Activated CD4-positive, alpha-beta T cell treated with anti-CD3 and anti-CD28 coated beads, Interleukin-2, amount 10 ng/mL, durations not matched to agents 24 days and 14 days (primary cell): ENCODE measurements at regions of chr12 and their contacts with region 1.

Region 1: GRCh38 chr12:110549716-110550115 is 33.4 kb downstream of the PPTC7 start:
- DNase-seq: no peak
- H3K4me3 Mint-ChIP-seq: no peak overlapping the region
- H3K27ac Mint-ChIP-seq: peak overlapping the region; percentile 55
- H3K4me1 Mint-ChIP-seq: peaks cover 32% of the 10 kb centered on the region
- H3K27me3 Mint-ChIP-seq: no peaks in the 10 kb centered on the region

Region 2: DNA sequence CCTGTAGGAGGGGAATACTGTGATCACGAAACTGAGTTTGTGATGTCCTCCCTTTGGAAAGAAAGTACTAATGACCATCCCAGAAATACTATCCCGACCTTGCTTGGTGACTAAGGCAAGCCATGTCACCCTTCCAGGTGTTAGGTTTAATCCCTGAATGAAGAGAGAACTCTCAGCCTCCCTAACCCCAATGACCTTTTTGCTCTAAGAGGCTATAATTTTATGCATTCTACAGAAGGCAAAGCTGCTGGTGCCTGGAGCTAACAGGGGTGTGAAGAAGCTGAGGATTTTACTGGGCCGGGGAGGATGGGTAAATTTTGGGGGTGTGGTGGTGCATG is 493.6 kb before region 1 on chr12:
- intact Hi-C with region 1: no loop called
- DNase-seq: no peak
- H3K4me3 Mint-ChIP-seq: no peak overlapping the region
- H3K27ac Mint-ChIP-seq: peak overlapping the region; percentile 90
- H3K4me1 Mint-ChIP-seq: peaks cover 41% of the 10 kb centered on the region
- H3K27me3 Mint-ChIP-seq: no peaks in the 10 kb centered on the region

Region 3: GRCh38 chr12:110501752-110502738 is 47.7 kb before region 1 on chr12 and contains the starts of genes RAD9B and VPS29:
- intact Hi-C with region 1: no loop called
- DNase-seq: peak; percentile 100
- H3K4me3 Mint-ChIP-seq: peak within 1 kb of the TSS; percentile 99
- H3K27ac Mint-ChIP-seq: peak within 1 kb of the TSS; percentile 99
- H3K4me1 Mint-ChIP-seq: peaks cover 27% of the 10 kb centered on the region
- H3K27me3 Mint-ChIP-seq: peaks cover 2% of the 10 kb centered on the region
- total RNA-seq, gene RAD9B: 0.37 and 0.95 TPM in 2 replicates
- total RNA-seq, gene VPS29: 101 and 106 TPM in 2 replicates

Region 4: GRCh38 chr12:110513842-110514241 is 35.9 kb before region 1 on chr12:
- intact Hi-C with region 1: loop called (anchors 5 kb)
- DNase-seq: no peak
- H3K4me3 Mint-ChIP-seq: no peak overlapping the region
- H3K27ac Mint-ChIP-seq: no peak overlapping the region
- H3K4me1 Mint-ChIP-seq: peaks cover 1% of the 10 kb centered on the region
- H3K27me3 Mint-ChIP-seq: peaks cover 13% of the 10 kb centered on the region

Region 5: GRCh38 chr12:110590806-110591326 is 41.1 kb after region 1 on chr12:
- intact Hi-C with region 1: no loop called
- DNase-seq: peak; percentile 82
- H3K4me3 Mint-ChIP-seq: peak overlapping the region; percentile 34
- H3K27ac Mint-ChIP-seq: peak overlapping the region; percentile 93
- H3K4me1 Mint-ChIP-seq: peaks cover 24% of the 10 kb centered on the region
- H3K27me3 Mint-ChIP-seq: no peaks in the 10 kb centered on the region